Right cardiac atrium (tissue), 5 donors: ENCODE measurements at regions of chr7 and their contacts with region 1.

Region 1: GRCh38 chr7:137074386-137075030 is 206.1 kb downstream of the CHRM2 start:
- DNase-seq: no peak
- ATAC-seq: no peak
- H3K4me3 ChIP-seq: no peak overlapping the region
- H3K27ac ChIP-seq: no peak overlapping the region
- H3K4me1 ChIP-seq: peaks cover 3% of the 10 kb centered on the region
- H3K27me3 ChIP-seq: no peaks in the 10 kb centered on the region

Region 2: GRCh38 chr7:136883046-136883445 is 191.5 kb before region 1 on chr7:
- intact Hi-C with region 1: loop called in 1 of 4 experiments (anchors 10 kb)
- DNase-seq: no peak
- ATAC-seq: no peak
- H3K4me3 ChIP-seq: no peak overlapping the region
- H3K27ac ChIP-seq: peak overlapping the region; percentile 90
- H3K4me1 ChIP-seq: no peaks in the 10 kb centered on the region
- H3K27me3 ChIP-seq: no peaks in the 10 kb centered on the region